Heart left ventricle (tissue), 16 donors: ENCODE measurements at regions of chr1 and their contacts with region 1.

Region 1: GRCh38 chr1:15152318-15153183 is 996 bp upstream of the TMEM51 start:
- DNase-seq: peak; percentile 82 to 91 (median 87)
- ATAC-seq: peak; percentile 55 to 79 (median 70)
- H3K4me3 ChIP-seq: peak overlapping the region; percentile 57 to 90 (median 80)
- H3K27ac ChIP-seq: peak overlapping the region; percentile 7 to 92 (median 76)
- H3K4me1 ChIP-seq: peaks cover 0 to 53% (median 15%) of the 10 kb centered on the region in 12 donors
- H3K27me3 ChIP-seq: peaks cover 0 to 9% (median 0%) of the 10 kb centered on the region in 9 donors
- CTCF ChIP-seq: peak; percentile 54 to 79 (median 66)
- POLR2A ChIP-seq: no peak

Region 2: GRCh38 chr1:15100121-15100874 is 52.3 kb before region 1 on chr1:
- intact Hi-C with region 1: no loop called
- DNase-seq: peak in 1 of 5 donors; percentile 42
- ATAC-seq: peak in 3 of 4 donors; percentile 52 to 70 (median 54)
- H3K4me3 ChIP-seq: no peak overlapping the region
- H3K27ac ChIP-seq: no peak overlapping the region
- H3K4me1 ChIP-seq: no peaks in the 10 kb centered on the region
- H3K27me3 ChIP-seq: peaks cover 0 to 36% (median 9%) of the 10 kb centered on the region in 9 donors
- CTCF ChIP-seq: peak; percentile 75 to 88 (median 83)
- POLR2A ChIP-seq: no peak

Region 3: GRCh38 chr1:15214527-15214926 is 62.0 kb after region 1 on chr1:
- intact Hi-C with region 1: loop called in 1 of 10 experiments (anchors 5 kb)
- DNase-seq: peak in 3 of 5 donors; percentile 32 to 72 (median 56)
- ATAC-seq: peak in 2 of 4 donors; percentile 59 to 73
- H3K4me3 ChIP-seq: no peak overlapping the region
- H3K27ac ChIP-seq: peak overlapping the region in 7 of 12 donors; percentile 18 to 80 (median 33)
- H3K4me1 ChIP-seq: peaks cover 0 to 51% (median 11%) of the 10 kb centered on the region in 12 donors
- H3K27me3 ChIP-seq: no peaks in the 10 kb centered on the region
- CTCF ChIP-seq: no peak
- POLR2A ChIP-seq: no peak

Region 4: DNA sequence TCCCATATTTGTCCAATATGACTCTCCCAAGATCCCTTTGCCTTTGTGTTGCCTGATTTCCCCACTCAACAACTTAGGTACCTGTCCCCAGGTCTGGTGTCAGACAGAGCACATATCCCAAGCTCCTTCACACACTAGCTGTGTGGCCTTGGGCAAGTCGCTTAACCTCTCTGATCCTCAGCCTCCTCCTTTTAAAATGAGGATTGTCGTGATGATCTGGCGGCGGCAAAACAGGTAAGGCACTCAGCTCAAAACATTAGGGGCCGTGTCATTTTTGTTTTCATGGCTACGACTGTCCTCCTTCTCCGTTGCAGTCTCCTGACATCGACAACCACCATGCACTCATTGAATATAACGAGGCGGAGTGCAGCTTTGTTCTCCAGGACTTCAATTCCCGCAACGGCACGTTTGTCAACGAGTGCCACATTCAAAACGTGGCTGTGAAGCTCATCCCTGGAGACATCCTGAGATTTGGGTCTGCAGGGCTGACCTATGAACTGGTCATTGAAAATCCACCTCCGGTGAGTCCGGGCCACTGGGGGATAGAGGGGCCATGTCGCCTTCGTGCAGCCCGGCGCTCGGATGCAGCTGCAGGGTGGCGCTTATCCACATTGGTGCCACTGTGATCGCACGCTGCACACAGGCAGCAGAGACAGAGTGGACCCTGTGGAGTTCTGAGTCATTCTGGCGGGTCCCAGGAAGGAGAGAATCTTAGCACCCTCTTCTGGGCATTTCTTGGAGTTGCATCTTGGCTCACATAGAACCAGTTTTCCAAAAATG is 119.6 kb after region 1 on chr1:
- intact Hi-C with region 1: loop called (anchors 1 to 5 kb)
- DNase-seq: peak in 4 of 5 donors; percentile 49 to 66 (median 53)
- ATAC-seq: peak in 3 of 4 donors; percentile 88 to 93 (median 92)
- H3K4me3 ChIP-seq: no peak overlapping the region
- H3K27ac ChIP-seq: no peak overlapping the region
- H3K4me1 ChIP-seq: peaks cover 0 to 20% (median 2%) of the 10 kb centered on the region in 12 donors
- H3K27me3 ChIP-seq: peaks cover 0 to 7% (median 0%) of the 10 kb centered on the region in 9 donors
- CTCF ChIP-seq: peak; percentile 56 to 84 (median 76)
- POLR2A ChIP-seq: no peak

Region 5: GRCh38 chr1:15304701-15305467 is 152.3 kb after region 1 on chr1:
- intact Hi-C with region 1: loop called in 1 of 10 experiments (anchors 1 kb)
- DNase-seq: peak in 4 of 5 donors; percentile 34 to 78 (median 46)
- ATAC-seq: peak in 3 of 4 donors; percentile 57 to 69 (median 62)
- H3K4me3 ChIP-seq: no peak overlapping the region
- H3K27ac ChIP-seq: no peak overlapping the region
- H3K4me1 ChIP-seq: peaks cover 0 to 6% (median 0%) of the 10 kb centered on the region in 12 donors
- H3K27me3 ChIP-seq: no peaks in the 10 kb centered on the region
- CTCF ChIP-seq: peak; percentile 72 to 91 (median 83)
- POLR2A ChIP-seq: no peak